SK-N-SH (cell line): ENCODE measurements at regions of chr4 and their contacts with region 1.

Region 1: DNA sequence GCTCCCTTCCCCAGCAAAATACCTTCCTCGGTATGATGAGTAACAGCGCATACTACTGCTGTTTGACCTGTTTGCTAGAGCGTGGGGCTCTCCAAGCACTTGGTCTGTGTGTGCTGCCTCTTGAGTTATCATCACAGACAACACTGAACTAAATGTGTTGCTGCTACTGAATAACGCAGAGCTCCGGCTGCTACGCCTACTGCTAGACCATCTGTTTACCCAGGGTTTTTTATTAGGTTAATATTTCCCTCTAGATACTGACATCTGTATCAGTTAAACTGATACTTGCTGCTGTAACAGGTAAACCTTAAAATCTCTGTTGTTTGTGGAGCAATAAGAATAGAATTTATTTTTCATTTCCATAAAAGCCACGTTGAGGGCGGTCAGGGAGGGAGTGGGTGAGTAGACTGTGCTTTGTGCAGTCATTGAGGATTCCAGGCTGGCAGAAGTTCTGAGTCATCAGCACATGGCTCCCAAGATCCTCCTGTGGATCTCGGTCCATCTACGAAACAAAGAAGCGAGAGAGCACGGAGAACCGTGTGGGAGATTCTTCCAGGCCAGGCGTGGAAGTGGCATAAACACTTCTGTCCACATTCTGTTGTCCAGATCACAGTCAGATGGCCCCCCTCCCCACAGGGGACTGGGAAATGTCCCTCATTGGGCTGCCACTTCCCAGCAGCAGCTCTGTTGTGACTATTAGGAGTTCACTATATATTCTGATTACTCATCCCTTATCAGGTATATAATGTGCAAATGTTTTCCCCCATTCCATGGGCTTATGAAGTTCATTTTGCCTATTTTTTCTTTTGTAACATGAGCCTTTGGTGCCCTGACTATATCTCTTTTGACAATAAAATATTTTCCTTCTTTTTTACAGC is 14.1 kb downstream of the GRK4 start:
- DNase-seq: no peak
- H3K4me3 ChIP-seq: no peak overlapping the region
- H3K27ac ChIP-seq: no peak overlapping the region
- H3K4me1 ChIP-seq: no peaks in the 10 kb centered on the region
- H3K27me3 ChIP-seq: no peaks in the 10 kb centered on the region
- CTCF ChIP-seq: no peak
- EP300 ChIP-seq: no peak
- RAD21 ChIP-seq: no peak

Region 2: DNA sequence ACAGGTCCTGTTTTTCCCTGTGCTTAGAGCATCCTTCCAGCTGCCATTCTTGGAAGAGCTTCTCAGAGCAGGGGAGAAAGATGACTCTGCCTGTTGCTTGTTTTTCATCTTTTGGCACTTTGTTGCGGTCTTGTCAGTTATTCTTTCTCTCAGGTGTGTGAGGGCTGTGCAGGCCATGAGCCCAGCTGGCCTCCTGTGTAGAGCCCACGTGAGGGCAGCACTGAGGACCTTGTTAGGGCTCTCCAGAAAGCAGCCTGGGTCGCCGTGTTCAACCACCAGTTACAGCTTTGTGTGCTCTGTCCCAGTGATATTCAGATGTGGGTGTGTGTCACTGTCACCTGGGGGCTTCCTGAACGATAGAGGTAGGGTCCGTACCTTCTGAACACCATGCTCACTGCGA is 67.0 kb before region 1 on chr4:
- CTCF ChIA-PET with region 1: no interaction called
- POLR2A ChIA-PET with region 1: no interaction called
- DNase-seq: no peak
- H3K4me3 ChIP-seq: no peak overlapping the region
- H3K27ac ChIP-seq: no peak overlapping the region
- H3K4me1 ChIP-seq: peaks cover 0 to 7% of the 10 kb centered on the region in 2 experiments; a peak in 2 of 4 replicates
- H3K27me3 ChIP-seq: no peaks in the 10 kb centered on the region
- CTCF ChIP-seq: no peak
- EP300 ChIP-seq: no peak
- RAD21 ChIP-seq: no peak

Region 3: GRCh38 chr4:2963175-2963965 is 14.1 kb before region 1 on chr4 and contains the starts of genes GRK4 and NOP14:
- CTCF ChIA-PET with region 1: interaction called, 45 read pairs
- POLR2A ChIA-PET with region 1: no interaction called
- DNase-seq: peak; percentile 97
- H3K4me3 ChIP-seq: peak within 1 kb of the TSS; percentile 91 to 92
- H3K27ac ChIP-seq: peak within 1 kb of the TSS; percentile 61 to 73
- H3K4me1 ChIP-seq: peaks cover 4 to 17% of the 10 kb centered on the region in 2 experiments; a peak in 2 of 4 replicates
- H3K27me3 ChIP-seq: no peaks in the 10 kb centered on the region
- CTCF ChIP-seq: peak; percentile 22; the same call in 1 of the 2 replicates
- EP300 ChIP-seq: no peak
- RAD21 ChIP-seq: no peak
- polyA plus RNA-seq, gene GRK4: 2.2 and 2.7 TPM in 2 replicates
- polyA plus RNA-seq, gene NOP14: 7.5 and 9.8 TPM in 2 replicates

Region 4: GRCh38 chr4:2995546-2996265 is 18.3 kb after region 1 on chr4:
- CTCF ChIA-PET with region 1: interaction called, 28 read pairs
- POLR2A ChIA-PET with region 1: no interaction called
- DNase-seq: no peak
- H3K4me3 ChIP-seq: no peak overlapping the region
- H3K27ac ChIP-seq: no peak overlapping the region
- H3K4me1 ChIP-seq: no peaks in the 10 kb centered on the region
- H3K27me3 ChIP-seq: no peaks in the 10 kb centered on the region
- CTCF ChIP-seq: no peak
- EP300 ChIP-seq: no peak
- RAD21 ChIP-seq: no peak

Region 5: DNA sequence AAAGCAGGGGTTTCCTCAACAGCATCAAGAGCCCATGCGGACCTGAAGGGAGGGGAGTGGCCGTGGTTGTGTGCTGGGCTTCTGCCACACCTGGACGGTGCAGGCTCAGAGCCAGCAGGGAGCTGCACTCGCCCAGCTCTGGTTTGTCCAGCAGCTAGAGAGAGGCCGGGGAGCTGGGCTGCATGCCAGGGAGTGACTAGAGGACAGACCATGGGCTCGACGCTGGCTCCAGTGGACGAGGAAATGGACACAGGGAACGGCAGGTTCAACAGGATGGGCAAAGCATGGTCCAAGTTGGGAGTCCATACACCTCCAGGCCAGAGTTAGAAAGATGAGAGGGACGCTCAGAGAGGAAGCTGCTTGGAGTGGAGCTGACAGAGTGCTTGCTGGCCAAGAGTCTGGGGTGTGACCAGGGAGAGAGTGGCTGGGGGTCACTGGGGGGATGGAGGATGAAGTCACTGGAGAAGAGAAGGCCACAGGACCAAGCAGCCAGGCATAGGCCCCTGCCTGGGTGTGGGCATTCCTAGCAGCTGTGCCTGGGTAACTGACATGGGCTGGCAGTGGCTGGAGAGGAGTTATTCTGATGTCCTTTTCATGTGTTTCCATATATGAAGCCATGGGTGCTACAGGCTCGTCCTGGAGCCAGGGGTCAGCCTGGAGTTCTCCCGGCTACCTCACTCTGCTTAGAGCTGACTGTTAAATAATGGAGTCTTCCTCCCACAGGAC is 54.1 kb after region 1 on chr4:
- CTCF ChIA-PET with region 1: interaction called, 73 read pairs
- POLR2A ChIA-PET with region 1: no interaction called
- DNase-seq: peak; percentile 53
- H3K4me3 ChIP-seq: no peak overlapping the region
- H3K27ac ChIP-seq: no peak overlapping the region
- H3K4me1 ChIP-seq: peaks cover 0 to 11% of the 10 kb centered on the region in 2 experiments; a peak in 1 of 4 replicates
- H3K27me3 ChIP-seq: no peaks in the 10 kb centered on the region
- CTCF ChIP-seq: no peak
- EP300 ChIP-seq: no peak
- RAD21 ChIP-seq: no peak

Region 6: GRCh38 chr4:3041192-3042142 is 64.0 kb after region 1 on chr4:
- CTCF ChIA-PET with region 1: interaction called, 73 read pairs
- POLR2A ChIA-PET with region 1: no interaction called
- DNase-seq: peak; percentile 62
- H3K4me3 ChIP-seq: no peak overlapping the region
- H3K27ac ChIP-seq: no peak overlapping the region
- H3K4me1 ChIP-seq: peaks cover 0 to 3% of the 10 kb centered on the region in 2 experiments; a peak in 1 of 4 replicates
- H3K27me3 ChIP-seq: no peaks in the 10 kb centered on the region
- CTCF ChIP-seq: no peak
- EP300 ChIP-seq: no peak
- RAD21 ChIP-seq: no peak

Region 7: DNA sequence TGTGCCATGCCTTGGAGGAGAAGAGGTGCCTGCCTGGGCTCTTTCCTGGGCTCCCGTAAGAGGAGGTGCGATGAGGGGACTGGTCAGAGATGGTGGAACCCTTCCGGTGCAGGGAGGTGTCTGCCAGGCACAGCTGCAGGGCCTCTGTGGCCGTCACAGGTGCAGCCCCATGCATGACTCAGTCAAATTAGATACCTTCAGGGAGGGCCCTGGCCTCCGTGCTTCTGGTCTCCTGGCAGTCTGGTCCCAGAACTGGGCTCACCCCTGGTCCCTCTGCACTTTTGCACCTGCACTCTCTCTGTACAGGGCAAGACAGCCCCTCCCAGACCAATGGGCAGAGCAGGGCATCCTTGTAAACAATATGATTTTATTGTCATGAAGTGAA is 604.6 kb after region 1 on chr4:
- CTCF ChIA-PET with region 1: no interaction called
- POLR2A ChIA-PET with region 1: no interaction called
- DNase-seq: no peak
- H3K4me3 ChIP-seq: no peak overlapping the region
- H3K27ac ChIP-seq: no peak overlapping the region
- H3K4me1 ChIP-seq: peaks cover 0 to 23% of the 10 kb centered on the region in 2 experiments; a peak in 1 of 4 replicates
- H3K27me3 ChIP-seq: no peaks in the 10 kb centered on the region
- CTCF ChIP-seq: no peak
- EP300 ChIP-seq: no peak
- RAD21 ChIP-seq: no peak